Left cardiac atrium (tissue), 4 donors: ENCODE measurements at regions of chr2 and their contacts with region 1.

Region 1: GRCh38 chr2:168455648-168456520 is at the start of gene CERS6:
- DNase-seq: peak; percentile 98
- ATAC-seq: peak; percentile 98
- total RNA-seq, gene CERS6: 44.7 to 47.0 TPM

Region 2: DNA sequence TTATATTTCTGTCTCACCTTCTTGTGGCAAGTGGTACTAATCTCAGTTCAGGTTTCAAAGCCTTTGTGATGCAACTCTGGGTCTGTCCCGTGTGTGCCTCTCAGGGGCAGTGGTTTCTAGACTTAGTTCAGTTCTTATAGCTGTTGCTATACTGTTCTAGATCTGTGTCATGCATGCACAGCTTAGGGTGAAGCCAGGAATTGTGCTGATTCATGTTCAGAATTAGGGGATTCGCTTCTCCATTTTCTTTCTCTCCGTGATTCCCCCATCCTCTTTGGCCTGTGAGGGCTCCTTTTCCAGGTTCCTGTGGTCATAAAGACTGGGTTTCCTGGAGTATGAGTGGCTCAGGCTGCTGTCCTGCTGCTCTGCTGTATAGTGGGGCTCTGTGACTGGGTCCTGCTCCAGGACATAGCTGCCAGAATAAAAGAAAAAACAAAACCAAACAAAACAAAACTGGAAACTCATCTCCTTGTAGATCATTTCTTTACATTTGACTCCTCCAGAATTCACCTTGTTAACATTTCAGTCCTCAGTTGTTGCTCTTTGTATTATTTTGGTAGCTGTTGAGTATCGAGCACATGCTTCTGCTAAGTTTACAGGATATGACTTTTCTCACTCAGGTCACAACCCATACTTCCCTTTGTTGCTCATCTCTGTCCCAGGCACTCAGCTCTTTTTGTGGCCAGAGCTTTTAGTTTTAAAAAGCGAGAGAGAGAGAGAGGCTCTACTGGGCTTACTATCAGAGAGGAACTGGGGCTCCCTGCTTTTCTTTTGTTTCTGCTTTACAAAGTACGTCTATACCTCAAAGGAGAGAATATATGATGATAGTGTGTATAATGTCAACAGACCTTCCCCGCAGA is 34.4 kb after region 1 on chr2:
- intact Hi-C with region 1: no loop called
- DNase-seq: no peak
- ATAC-seq: peak; percentile 57 to 77

Region 3: DNA sequence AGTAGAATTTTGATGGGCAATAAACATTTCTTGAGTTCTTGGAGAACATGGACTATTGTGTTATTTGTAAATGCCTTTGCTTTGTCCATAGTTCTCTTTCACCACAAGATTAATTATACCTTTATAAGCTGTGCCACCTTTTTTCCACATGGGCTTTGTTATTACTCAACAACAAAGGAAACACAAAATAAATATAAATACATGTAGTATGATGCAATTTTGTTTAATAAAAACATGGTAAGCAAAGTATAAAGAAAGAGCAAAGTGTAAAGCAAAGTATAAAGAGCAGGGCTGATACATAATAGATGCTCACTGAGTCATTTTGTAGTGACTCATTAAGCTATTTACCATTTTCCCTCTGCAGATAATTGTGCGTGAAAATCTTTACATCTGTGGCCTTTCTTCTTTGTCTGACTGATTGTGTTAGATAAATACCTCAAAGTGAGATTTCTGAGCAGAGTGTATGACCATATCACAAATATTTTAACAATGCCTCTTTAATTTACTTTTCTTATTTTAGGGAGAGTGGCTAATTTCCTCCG is 81.1 kb after region 1 on chr2:
- intact Hi-C with region 1: loop called in 1 of 2 experiments (anchors 5 kb)
- DNase-seq: no peak
- ATAC-seq: no peak